Activated T-helper 2 cell treated with anti-CD3 and anti-CD28 coated beads, Interferon-gamma antibody, Interleukin-2, Interleukin-4, amounts not matched to agents 10 μg/mL and 5 μg/mL and 100 μg/mL, durations not matched to agents 14 hours and 24 hours and 36 hours (primary cell): ENCODE measurements at regions of chr1 and their contacts with region 1.

Region 1: GRCh38 chr1:40508375-40509341 is at the start of gene EXO5:
- DNase-seq: peak; percentile 82
- H3K4me3 Mint-ChIP-seq: peak within 1 kb of the TSS; percentile 83
- H3K27ac Mint-ChIP-seq: peak within 1 kb of the TSS; percentile 76
- H3K4me1 Mint-ChIP-seq: peaks cover 10% of the 10 kb centered on the region
- H3K27me3 Mint-ChIP-seq: no peaks in the 10 kb centered on the region
- total RNA-seq, gene EXO5: 11.9 and 13.6 TPM in 2 replicates

Region 2: DNA sequence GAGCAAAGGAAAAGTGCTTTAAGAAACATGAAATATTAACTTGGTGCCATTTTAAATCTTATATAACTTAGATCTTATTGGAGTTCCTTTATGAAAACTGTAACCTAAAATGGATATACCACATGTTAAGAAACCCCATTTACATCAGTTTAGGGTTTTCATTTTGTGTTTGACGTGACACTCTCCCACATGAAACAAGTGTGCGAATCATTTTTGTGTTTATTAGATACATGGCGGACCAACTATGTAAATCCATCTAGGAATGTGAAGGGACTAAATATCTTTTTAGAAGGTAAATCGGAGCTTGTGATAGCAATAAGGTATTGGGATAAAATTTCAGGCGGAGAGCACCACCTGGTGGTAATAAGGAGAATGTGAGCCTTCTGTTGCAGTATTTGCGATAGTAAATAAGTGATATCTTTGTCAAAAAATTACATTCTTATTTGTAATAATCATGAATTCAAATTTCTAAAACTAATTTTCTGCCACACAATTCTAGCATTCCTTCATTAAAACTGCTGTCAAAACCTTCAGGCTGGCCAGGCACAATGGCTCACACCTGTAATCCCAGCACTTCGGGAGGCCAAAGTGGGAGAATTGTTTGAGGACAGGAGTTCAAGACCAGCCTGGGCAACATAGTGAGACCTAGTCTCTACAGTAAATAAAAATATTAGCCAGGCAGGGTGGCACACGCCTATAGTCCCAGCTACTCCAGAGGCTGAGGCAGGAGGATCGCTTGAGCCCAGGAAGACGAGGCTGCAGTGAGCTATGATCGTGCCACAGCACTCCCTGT is 103.8 kb before region 1 on chr1:
- intact Hi-C with region 1: no loop called
- DNase-seq: no peak
- H3K4me3 Mint-ChIP-seq: peak overlapping the region; percentile 28
- H3K27ac Mint-ChIP-seq: peak overlapping the region; percentile 87
- H3K4me1 Mint-ChIP-seq: peaks cover 46% of the 10 kb centered on the region
- H3K27me3 Mint-ChIP-seq: no peaks in the 10 kb centered on the region

Region 3: GRCh38 chr1:40531381-40532061 is 22.9 kb after region 1 on chr1 and contains the start of gene ZNF684:
- intact Hi-C with region 1: loop called (anchors 1 kb)
- DNase-seq: peak; percentile 82
- H3K4me3 Mint-ChIP-seq: peak within 1 kb of the TSS; percentile 97
- H3K27ac Mint-ChIP-seq: peak within 1 kb of the TSS; percentile 91
- H3K4me1 Mint-ChIP-seq: peaks cover 20% of the 10 kb centered on the region
- H3K27me3 Mint-ChIP-seq: no peaks in the 10 kb centered on the region
- total RNA-seq, gene ZNF684: 4.1 and 4.8 TPM in 2 replicates